HCT116 (cell line): ENCODE measurements at regions of chr5 and their contacts with region 1.

Region 1: DNA sequence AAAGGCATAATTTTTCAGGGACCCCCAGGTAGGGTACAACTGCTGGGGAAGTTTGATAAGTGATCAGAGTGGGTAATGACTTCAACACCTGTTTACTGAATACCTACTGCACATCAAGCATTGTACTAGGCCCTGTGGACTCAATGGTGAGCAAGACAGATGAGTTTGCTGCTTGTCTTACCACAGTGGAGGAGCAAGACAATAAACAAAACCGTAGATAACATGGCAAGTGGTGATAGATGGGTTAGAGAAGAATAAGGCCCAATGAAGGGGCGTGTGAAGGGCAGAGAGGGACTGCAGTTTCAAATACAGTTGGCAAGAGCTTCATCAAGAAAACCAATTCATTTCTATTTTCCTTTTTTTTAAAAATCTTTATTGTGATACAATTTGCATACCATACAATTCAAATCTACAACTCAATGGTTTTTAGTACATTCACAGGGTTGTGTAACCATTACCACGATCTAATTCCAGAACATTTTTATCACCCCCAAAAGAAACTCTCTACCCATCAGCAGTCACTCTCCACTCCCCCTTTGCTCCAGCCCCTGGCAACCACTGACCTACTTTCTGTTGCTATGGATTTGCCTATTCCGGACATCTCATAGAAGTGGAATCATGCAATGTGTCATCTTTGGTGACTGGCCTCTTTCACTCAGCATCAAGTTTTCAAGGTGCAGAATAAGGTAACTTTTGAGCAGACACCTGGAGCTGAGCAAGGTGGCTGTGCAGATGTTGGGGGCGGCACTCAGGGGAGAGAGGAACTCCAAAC is 31.9 kb upstream of the HAND1 start:
- DNase-seq: no peak
- ATAC-seq: no peak
- H3K4me3 ChIP-seq: no peak overlapping the region
- H3K27ac ChIP-seq: no peak overlapping the region
- H3K4me1 ChIP-seq: no peaks in the 10 kb centered on the region
- H3K27me3 ChIP-seq: no peaks in the 10 kb centered on the region
- CTCF ChIP-seq: no peak
- POLR2A ChIP-seq: no peak
- RAD21 ChIP-seq: no peak

Region 2: GRCh38 chr5:154031937-154032489 is 478.0 kb before region 1 on chr5:
- CTCF ChIA-PET with region 1: no interaction called
- POLR2A ChIA-PET with region 1: no interaction called
- RAD21 ChIA-PET with region 1: no interaction called
- intact Hi-C with region 1: no loop called
- DNase-seq: no peak
- ATAC-seq: no peak
- H3K4me3 ChIP-seq: no peak overlapping the region
- H3K27ac ChIP-seq: no peak overlapping the region
- H3K4me1 ChIP-seq: no peaks in the 10 kb centered on the region
- H3K27me3 ChIP-seq: no peaks in the 10 kb centered on the region
- CTCF ChIP-seq: no peak
- POLR2A ChIP-seq: no peak
- RAD21 ChIP-seq: no peak

Region 3: GRCh38 chr5:154179846-154180710 is 329.9 kb before region 1 on chr5:
- CTCF ChIA-PET with region 1: no interaction called
- POLR2A ChIA-PET with region 1: no interaction called
- RAD21 ChIA-PET with region 1: no interaction called
- intact Hi-C with region 1: no loop called
- DNase-seq: peak; percentile 40
- ATAC-seq: peak; percentile 97
- H3K4me3 ChIP-seq: no peak overlapping the region
- H3K27ac ChIP-seq: no peak overlapping the region
- H3K4me1 ChIP-seq: no peaks in the 10 kb centered on the region
- H3K27me3 ChIP-seq: peaks cover 29% of the 10 kb centered on the region; the same call in 1 of the 2 replicates
- CTCF ChIP-seq: peak; percentile 76 to 80 (median 78)
- POLR2A ChIP-seq: no peak
- RAD21 ChIP-seq: peak; percentile 73

Region 4: DNA sequence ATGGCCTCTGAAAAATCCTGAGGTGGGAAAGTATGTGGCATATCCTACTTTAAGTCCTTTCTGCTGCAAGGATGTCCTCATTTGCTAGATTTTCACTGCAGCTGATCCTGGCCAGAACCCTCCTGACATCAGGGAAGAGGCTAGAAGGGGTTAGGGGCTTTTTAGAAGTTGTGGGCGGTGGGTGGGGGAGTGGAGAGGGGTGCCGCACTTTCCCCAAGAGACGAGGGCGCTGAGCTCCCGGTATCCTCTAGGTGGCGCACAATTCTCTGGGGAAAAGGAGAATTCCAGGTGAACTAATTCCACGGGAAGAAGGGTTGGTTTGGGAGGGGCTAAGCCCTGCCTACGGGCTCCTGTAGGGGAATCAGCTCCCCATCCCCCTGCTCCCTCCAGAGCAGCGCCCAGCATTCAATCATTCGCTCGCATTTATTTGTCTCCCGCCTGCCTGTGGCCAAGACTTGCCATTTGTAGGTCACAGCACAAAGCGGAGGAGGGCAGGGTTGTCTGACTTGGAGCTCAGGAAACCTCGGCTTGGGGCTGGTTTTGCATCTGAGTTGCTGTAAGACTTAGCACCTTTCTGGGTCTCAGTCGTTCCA is 11.0 kb after region 1 on chr5:
- CTCF ChIA-PET with region 1: interaction called, 24 read pairs
- POLR2A ChIA-PET with region 1: interaction called, 4 read pairs
- RAD21 ChIA-PET with region 1: no interaction called
- intact Hi-C with region 1: no loop called
- DNase-seq: peak; percentile 63
- ATAC-seq: peak; percentile 91
- H3K4me3 ChIP-seq: peak overlapping the region; percentile 16 to 37; a peak in 3 of 4 replicates
- H3K27ac ChIP-seq: no peak overlapping the region
- H3K4me1 ChIP-seq: peaks cover 5 to 21% of the 10 kb centered on the region in 2 experiments; a peak in 3 of 4 replicates
- H3K27me3 ChIP-seq: no peaks in the 10 kb centered on the region
- CTCF ChIP-seq: peak; percentile 84 to 95 (median 91)
- POLR2A ChIP-seq: no peak
- RAD21 ChIP-seq: peak; percentile 74